OCI-LY7 (cell line): ENCODE measurements at regions of chr7 and their contacts with region 1.

Region 1: DNA sequence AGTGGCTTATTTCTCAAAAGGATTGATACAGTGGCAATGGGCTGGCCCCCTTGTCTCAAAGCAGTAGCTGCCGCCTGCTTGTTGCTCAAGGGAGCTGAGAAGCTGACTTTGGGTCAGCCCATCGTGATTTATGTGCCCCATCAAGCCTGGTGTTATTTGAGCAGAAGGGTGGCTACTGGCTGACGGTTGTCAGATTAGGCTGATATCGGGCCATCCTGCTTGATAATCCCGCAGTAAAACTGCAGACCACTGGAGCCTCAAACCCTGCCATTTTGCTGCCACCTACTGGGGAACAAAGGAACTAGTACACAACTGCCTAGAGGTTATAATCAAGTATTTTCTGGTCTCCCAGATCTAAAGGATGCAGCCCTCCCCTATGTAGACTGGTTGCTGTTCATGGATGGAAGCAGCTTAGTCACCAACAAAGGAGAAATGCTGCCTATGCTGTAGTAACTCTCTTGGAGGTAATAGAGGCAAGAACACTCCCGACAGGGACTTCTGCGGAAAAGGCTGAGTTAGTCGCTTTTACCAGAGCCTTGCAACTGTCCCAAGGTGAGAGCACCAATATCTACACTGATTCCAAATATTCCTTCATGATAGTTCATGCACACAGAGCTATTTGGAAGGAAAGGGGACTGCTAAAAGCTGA is 65.9 kb upstream of the ZNF92 start:
- DNase-seq: peak; percentile 81
- H3K4me3 ChIP-seq: no peak overlapping the region
- H3K27ac ChIP-seq: no peak overlapping the region
- H3K4me1 ChIP-seq: no peaks in the 10 kb centered on the region
- CTCF ChIP-seq: peak; percentile 95

Region 2: GRCh38 chr7:64951250-64951848 is 356.4 kb before region 1 on chr7:
- CTCF ChIA-PET with region 1: no interaction called
- POLR2A ChIA-PET with region 1: no interaction called
- intact Hi-C with region 1: loop called (anchors 1 kb)
- DNase-seq: peak; percentile 72
- H3K4me3 ChIP-seq: no peak overlapping the region
- H3K27ac ChIP-seq: no peak overlapping the region
- H3K4me1 ChIP-seq: no peaks in the 10 kb centered on the region
- CTCF ChIP-seq: peak; percentile 92